ENCODE measurements at regions of chr9 and their contacts with region 1.

Region 1: DNA sequence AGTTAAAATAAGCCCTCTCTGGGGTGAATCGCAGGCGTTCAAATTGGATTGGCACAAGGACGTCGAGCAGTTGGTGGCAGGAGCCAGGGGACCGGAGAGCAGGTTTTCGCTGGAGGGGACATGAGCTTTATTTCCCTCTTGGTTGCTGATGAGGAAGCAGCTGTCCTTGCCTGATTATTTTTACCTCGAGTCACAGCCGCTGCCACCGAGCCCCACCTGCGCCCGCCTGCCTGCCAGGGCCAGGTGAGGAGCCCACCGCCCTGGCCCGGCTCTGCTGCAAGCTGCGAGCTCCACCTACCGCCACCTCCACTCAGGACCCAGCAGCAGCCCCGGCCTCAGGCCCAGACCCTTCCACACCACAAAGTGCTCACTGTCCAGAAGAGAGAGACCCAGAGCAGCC is 9.0 kb upstream of the ADGRD2 start:
- DNase-seq: no peak
- ATAC-seq: no peak
- H3K4me3 ChIP-seq: no peak overlapping the region
- H3K27ac ChIP-seq: no peak overlapping the region
- H3K4me1 ChIP-seq: no peaks in the 10 kb centered on the region
- H3K27me3 ChIP-seq: no peaks in the 10 kb centered on the region
- CTCF ChIP-seq: no peak

Region 2: DNA sequence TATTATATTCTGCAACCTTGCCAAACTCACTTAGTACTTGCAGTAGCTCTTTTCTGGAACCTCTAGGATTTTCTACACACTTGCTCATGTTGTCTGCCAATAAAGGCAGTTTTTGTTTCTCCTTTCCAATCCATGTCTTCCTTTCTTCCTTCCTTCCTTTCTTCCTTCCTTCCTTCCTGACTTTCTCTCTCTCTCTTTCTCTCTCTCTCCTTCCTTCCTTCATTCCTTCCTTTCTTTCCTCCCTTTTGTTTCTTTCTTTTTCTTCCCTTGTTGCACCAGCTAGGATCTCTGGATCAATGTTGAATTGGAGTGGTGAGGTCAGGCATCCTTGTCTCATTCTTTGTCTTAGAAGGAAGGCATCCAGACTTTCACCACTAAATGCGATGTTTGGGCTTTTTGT is 21.4 kb after region 1 on chr9:
- CTCF ChIA-PET with region 1: no interaction called
- POLR2A ChIA-PET with region 1: interaction called, 13 read pairs
- in situ Hi-C with region 1: no loop called
- intact Hi-C with region 1: no loop called
- DNase-seq: no peak
- ATAC-seq: no peak
- H3K4me3 ChIP-seq: no peak overlapping the region
- H3K27ac ChIP-seq: no peak overlapping the region
- H3K4me1 ChIP-seq: no peaks in the 10 kb centered on the region
- H3K27me3 ChIP-seq: no peaks in the 10 kb centered on the region
- CTCF ChIP-seq: no peak

Region 3: DNA sequence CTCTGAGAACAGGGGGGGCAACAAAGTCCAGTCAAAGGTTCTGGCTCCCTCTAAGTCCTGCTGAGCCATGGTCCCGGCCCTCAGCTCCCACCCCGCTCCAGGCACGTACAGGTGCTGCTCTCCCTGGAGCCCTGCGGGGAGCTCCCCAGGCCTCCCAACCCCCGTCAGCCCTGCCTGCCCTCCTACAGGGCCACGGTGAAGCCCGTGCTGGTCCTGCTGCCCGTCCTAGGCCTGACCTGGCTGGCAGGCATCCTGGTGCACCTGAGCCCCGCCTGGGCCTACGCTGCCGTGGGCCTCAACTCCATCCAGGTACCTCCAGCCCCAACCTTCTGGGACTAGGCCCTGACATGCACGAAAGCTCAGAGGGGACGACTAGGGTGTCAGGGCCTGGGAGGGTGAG is 29.0 kb after region 1 on chr9:
- CTCF ChIA-PET with region 1: no interaction called
- POLR2A ChIA-PET with region 1: interaction called, 12 read pairs
- in situ Hi-C with region 1: no loop called
- intact Hi-C with region 1: no loop called
- DNase-seq: no peak
- ATAC-seq: no peak
- H3K4me3 ChIP-seq: no peak overlapping the region
- H3K27ac ChIP-seq: no peak overlapping the region
- H3K4me1 ChIP-seq: no peaks in the 10 kb centered on the region
- H3K27me3 ChIP-seq: no peaks in the 10 kb centered on the region
- CTCF ChIP-seq: no peak

Measured in Panc1 (cell line).